Transverse colon (tissue), 4 donors: ENCODE measurements at regions of chr15 and their contacts with region 1.

Region 1: DNA sequence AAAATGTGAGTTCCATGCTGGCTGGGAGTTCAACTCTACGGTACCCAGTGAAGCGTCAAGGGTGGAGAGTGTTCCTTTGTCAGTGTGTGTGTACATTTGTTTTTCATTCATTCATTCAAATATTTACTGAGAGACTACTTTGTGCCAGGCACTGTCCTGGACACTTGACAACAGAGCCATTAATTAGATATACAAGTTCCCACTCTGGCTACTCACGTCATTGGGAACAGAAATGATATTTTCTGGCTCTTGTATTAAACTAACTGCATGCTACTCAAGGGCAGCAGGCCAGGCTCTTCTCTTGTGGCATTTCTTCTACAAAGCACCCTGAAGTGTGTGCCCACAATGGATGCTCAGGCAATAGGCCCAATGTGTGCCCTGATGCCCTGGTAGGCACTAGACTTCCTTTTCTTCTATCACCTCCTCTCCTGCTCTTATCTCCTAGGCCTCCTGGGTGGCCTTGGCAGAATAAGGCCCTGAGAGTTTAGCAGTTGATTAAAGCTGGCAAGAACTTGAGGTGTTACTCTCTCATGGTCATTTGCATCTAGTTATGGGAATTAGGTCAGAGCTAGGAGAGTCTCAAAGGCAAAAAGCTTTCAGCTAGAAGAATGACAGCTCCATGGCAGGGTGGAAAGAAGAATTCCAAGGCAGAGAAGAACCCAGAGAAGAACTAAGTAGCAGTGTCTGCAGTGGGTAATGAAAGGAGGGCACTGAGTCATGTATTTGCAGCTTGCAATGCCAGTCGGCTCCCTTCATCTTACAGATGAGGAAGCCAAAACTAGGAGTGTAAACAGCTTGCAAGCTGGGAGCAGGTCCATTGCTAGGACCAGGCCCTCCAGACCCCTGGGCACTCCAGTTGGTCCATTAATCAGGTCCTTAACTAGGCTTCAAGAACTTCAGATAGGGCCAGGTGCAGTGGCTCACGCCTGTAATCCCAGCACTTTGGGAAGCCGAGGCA is 14.0 kb upstream of the SMAD3 start:
- DNase-seq: no peak
- H3K4me3 ChIP-seq: no peak overlapping the region
- H3K27ac ChIP-seq: peak overlapping the region; percentile 13 to 90 (median 88)
- H3K4me1 ChIP-seq: peaks cover 28 to 41% (median 30%) of the 10 kb centered on the region in 4 donors
- H3K27me3 ChIP-seq: no peaks in the 10 kb centered on the region
- CTCF ChIP-seq: no peak
- EP300 ChIP-seq: no peak
- POLR2A ChIP-seq: no peak

Region 2: GRCh38 chr15:67010898-67011616 is 40.3 kb before region 1 on chr15:
- in situ Hi-C with region 1: no loop called
- intact Hi-C with region 1: loop called (anchors 1 kb)
- DNase-seq: no peak
- H3K4me3 ChIP-seq: no peak overlapping the region
- H3K27ac ChIP-seq: no peak overlapping the region
- H3K4me1 ChIP-seq: no peaks in the 10 kb centered on the region
- H3K27me3 ChIP-seq: no peaks in the 10 kb centered on the region
- CTCF ChIP-seq: no peak
- EP300 ChIP-seq: no peak
- POLR2A ChIP-seq: no peak